Activated naive CD4-positive, alpha-beta T cell treated with anti-CD3 and anti-CD28 coated beads for 36 hours (primary cell): ENCODE measurements at regions of chr16 and their contacts with region 1.

Region 1: DNA sequence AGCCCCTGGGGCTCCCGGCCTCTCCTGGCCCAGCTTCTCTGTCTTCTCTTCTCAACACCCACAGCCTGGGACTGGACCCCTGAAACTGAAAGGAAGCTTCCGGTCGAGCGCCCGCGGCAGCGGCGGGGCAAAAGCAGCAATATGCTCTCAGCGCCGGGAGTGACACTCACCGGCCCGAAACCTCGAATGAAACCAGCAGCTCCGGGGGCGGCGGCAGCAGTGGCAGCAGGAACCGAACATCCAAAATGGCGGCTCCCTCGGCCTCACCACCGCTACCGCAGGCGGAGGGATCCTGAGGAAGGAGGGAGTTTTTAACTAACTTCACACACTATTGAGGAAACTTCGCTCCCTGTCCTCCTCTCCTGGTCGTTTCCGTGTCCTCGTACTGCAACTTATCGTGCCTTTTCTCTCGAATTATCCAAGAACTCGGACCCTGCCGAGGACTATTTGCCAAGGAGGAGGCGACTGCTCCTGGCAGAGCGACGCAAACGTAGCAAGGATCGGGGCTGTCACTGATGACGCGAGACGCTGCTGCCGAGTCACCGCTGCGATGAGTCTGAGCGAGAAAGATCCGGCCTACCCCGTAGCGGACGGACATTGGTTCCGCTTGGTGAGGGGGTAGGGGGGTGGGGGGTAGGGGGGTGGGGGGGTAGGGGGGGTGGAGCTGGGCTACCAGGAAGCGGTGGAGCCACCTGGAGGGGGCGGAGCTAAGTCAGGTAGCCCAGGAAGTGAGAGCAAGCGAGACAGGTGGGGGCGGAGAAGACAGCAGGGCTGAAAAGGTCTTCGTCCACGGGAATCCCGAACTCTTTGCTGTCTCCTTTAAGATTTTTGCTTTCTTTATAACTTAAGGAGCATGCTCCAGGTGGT is at the start of gene AP1G1:
- DNase-seq: peak; percentile 97
- H3K4me3 Mint-ChIP-seq: peak within 1 kb of the TSS; percentile 90
- H3K27ac Mint-ChIP-seq: peak within 1 kb of the TSS; percentile 100
- H3K4me1 Mint-ChIP-seq: peaks cover 42% of the 10 kb centered on the region
- H3K27me3 Mint-ChIP-seq: no peaks in the 10 kb centered on the region
- total RNA-seq, gene AP1G1: 56.4 to 59.3 TPM

Region 2: DNA sequence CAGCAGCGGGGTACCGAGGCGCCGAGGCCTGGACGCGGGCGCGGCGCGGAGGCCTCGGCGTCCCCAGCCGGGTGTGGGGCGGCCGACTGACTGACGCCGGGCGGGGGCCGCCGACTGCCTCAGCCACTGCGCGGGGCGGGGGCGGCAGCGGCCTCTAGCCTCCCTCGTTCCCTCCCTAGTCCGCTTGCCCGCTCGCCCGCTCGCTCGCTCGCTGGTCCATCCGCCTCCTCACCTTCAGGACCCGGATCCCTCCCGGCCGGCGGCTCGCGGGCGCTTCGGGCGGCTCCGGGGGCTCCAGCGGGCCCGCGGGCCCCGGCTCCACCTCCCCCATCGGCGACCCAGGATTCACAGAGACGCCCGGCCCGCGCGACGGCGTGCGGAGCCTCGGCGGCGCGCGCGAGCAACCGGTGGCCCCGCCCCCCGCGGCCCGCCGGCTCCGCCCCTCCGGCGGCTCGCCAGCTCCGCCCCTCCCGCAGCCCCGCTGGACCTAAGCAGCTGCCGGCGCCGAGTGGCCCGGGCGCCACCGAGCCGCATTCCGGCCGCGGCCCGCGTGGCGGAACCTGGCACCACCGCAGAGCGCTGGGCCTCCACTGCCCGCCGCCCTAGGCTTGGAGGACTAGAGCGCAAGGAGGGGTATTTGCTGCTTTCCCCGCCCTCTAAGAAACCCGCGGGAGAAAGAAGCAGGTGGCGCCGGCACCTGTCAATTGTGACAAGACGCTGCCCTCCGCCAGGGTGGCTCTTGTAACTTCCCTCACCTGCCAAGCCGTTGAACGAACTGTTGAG is 85.1 kb before region 1 on chr16:
- CTCF ChIA-PET with region 1: no interaction called
- intact Hi-C with region 1: loop called (anchors 2 kb)
- DNase-seq: peak; percentile 74
- H3K4me3 Mint-ChIP-seq: peak overlapping the region; percentile 80
- H3K27ac Mint-ChIP-seq: no peak overlapping the region
- H3K4me1 Mint-ChIP-seq: peaks cover 18% of the 10 kb centered on the region
- H3K27me3 Mint-ChIP-seq: peaks cover 6% of the 10 kb centered on the region

Region 3: GRCh38 chr16:71754652-71755051 is 54.2 kb before region 1 on chr16:
- CTCF ChIA-PET with region 1: no interaction called
- intact Hi-C with region 1: loop called (anchors 1 kb)
- DNase-seq: peak; percentile 10
- H3K4me3 Mint-ChIP-seq: no peak overlapping the region
- H3K27ac Mint-ChIP-seq: peak overlapping the region; percentile 81
- H3K4me1 Mint-ChIP-seq: peaks cover 23% of the 10 kb centered on the region
- H3K27me3 Mint-ChIP-seq: no peaks in the 10 kb centered on the region

Region 4: GRCh38 chr16:71794943-71795342 is 13.9 kb before region 1 on chr16:
- CTCF ChIA-PET with region 1: no interaction called
- intact Hi-C with region 1: loop called (anchors 1 kb)
- DNase-seq: no peak
- H3K4me3 Mint-ChIP-seq: no peak overlapping the region
- H3K27ac Mint-ChIP-seq: no peak overlapping the region
- H3K4me1 Mint-ChIP-seq: peaks cover 59% of the 10 kb centered on the region
- H3K27me3 Mint-ChIP-seq: no peaks in the 10 kb centered on the region

Region 5: GRCh38 chr16:71845639-71846430 is 37.0 kb after region 1 on chr16 and contains the start of gene ATXN1L:
- CTCF ChIA-PET with region 1: interaction called, 3 read pairs
- intact Hi-C with region 1: loop called (anchors 1 kb)
- DNase-seq: peak; percentile 90
- H3K4me3 Mint-ChIP-seq: peak within 1 kb of the TSS; percentile 88
- H3K27ac Mint-ChIP-seq: peak within 1 kb of the TSS; percentile 93
- H3K4me1 Mint-ChIP-seq: peaks cover 44% of the 10 kb centered on the region
- H3K27me3 Mint-ChIP-seq: no peaks in the 10 kb centered on the region
- total RNA-seq, gene ATXN1L: 11.3 to 11.9 TPM

Region 6: GRCh38 chr16:71894921-71895678 is 86.3 kb after region 1 on chr16 and contains the start of gene IST1:
- CTCF ChIA-PET with region 1: no interaction called
- intact Hi-C with region 1: loop called (anchors 1 kb)
- DNase-seq: peak; percentile 99
- H3K4me3 Mint-ChIP-seq: peak within 1 kb of the TSS; percentile 97
- H3K27ac Mint-ChIP-seq: peak within 1 kb of the TSS; percentile 96
- H3K4me1 Mint-ChIP-seq: peaks cover 33% of the 10 kb centered on the region
- H3K27me3 Mint-ChIP-seq: no peaks in the 10 kb centered on the region
- total RNA-seq, gene IST1: 196 to 203 TPM

Region 7: GRCh38 chr16:72008424-72009216 is 199.8 kb after region 1 on chr16 and contains the start of gene DHODH:
- CTCF ChIA-PET with region 1: no interaction called
- intact Hi-C with region 1: loop called (anchors 5 kb)
- DNase-seq: peak; percentile 99
- H3K4me3 Mint-ChIP-seq: peak within 1 kb of the TSS; percentile 94
- H3K27ac Mint-ChIP-seq: peak within 1 kb of the TSS; percentile 76
- H3K4me1 Mint-ChIP-seq: peaks cover 21% of the 10 kb centered on the region
- H3K27me3 Mint-ChIP-seq: no peaks in the 10 kb centered on the region
- total RNA-seq, gene DHODH: 18.3 to 19.9 TPM